ENCODE measurements at regions of chr5 and their contacts with region 1.

Region 1: GRCh38 chr5:141618804-141619554 is at the start of gene DIAPH1:
- DNase-seq: peak; percentile 92
- ATAC-seq: peak; percentile 88
- H3K4me3 ChIP-seq: peak within 1 kb of the TSS; percentile 95
- H3K27ac ChIP-seq: peak within 1 kb of the TSS; percentile 86
- H3K4me1 ChIP-seq: peaks cover 17% of the 10 kb centered on the region; the same call in 1 of the 2 replicates
- H3K27me3 ChIP-seq: no peaks in the 10 kb centered on the region
- CTCF ChIP-seq: peak; percentile 82
- total RNA-seq, gene DIAPH1: 51.9 and 106 TPM in 2 replicates

Region 2: DNA sequence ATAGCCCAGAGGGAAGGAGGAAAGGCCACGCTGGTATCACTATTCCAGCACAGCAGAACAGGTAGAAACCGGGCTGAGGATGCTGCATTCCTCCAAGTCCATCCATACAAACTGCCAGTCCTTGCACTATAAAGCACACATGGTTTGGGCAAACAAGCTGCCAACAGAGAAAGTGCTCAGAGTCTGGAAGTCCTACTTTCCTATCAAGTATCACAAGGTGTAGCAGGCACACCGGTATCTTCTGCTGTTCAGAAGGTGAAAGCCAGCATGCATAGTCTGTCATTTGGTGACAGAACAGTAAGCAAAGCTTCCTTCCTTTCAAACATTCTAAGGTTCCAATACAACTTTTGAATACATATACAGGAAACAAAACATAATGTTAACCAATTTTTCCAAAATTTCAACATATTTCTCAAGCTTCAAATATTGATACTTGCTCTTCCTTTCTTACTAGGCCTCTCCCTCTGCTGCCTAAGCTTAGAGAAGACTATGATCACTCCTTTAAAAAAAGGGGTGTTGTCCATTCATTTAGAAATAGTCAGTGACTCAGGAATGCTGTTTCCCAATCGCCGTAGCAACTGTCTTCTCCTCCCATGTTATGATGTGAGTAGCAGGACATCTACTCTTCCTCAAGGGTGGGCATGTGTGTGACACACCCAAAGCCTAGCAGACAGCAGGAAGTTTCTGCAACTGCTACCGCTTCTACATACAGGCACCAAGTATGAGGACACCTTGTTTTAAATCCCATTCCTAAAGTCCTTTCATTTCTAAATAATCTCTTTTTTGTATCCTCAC is 14.9 kb before region 1 on chr5:
- CTCF ChIA-PET with region 1: interaction called, 5 read pairs
- POLR2A ChIA-PET with region 1: no interaction called
- intact Hi-C with region 1: loop called (anchors 1 kb)
- DNase-seq: peak; percentile 90
- ATAC-seq: peak; percentile 98
- H3K4me3 ChIP-seq: no peak overlapping the region
- H3K27ac ChIP-seq: peak overlapping the region; percentile 58
- H3K4me1 ChIP-seq: peaks cover 22% of the 10 kb centered on the region
- H3K27me3 ChIP-seq: no peaks in the 10 kb centered on the region
- CTCF ChIP-seq: no peak

Region 3: GRCh38 chr5:141636413-141637122 is 17.6 kb after region 1 on chr5 and contains the starts of genes HDAC3 and RELL2:
- CTCF ChIA-PET with region 1: interaction called, 14 read pairs
- POLR2A ChIA-PET with region 1: interaction called, 4 read pairs
- intact Hi-C with region 1: loop called (anchors 2 kb)
- DNase-seq: peak; percentile 89
- ATAC-seq: peak; percentile 87
- H3K4me3 ChIP-seq: peak within 1 kb of the TSS; percentile 98
- H3K27ac ChIP-seq: peak within 1 kb of the TSS; percentile 26; the same call in 1 of the 2 replicates
- H3K4me1 ChIP-seq: peaks cover 34% of the 10 kb centered on the region
- H3K27me3 ChIP-seq: no peaks in the 10 kb centered on the region
- CTCF ChIP-seq: no peak
- total RNA-seq, gene HDAC3: 66.8 and 82.9 TPM in 2 replicates
- total RNA-seq, gene RELL2: 4.1 and 5.6 TPM in 2 replicates